ENCODE measurements at regions of chr17 and their contacts with region 1.

Region 1: DNA sequence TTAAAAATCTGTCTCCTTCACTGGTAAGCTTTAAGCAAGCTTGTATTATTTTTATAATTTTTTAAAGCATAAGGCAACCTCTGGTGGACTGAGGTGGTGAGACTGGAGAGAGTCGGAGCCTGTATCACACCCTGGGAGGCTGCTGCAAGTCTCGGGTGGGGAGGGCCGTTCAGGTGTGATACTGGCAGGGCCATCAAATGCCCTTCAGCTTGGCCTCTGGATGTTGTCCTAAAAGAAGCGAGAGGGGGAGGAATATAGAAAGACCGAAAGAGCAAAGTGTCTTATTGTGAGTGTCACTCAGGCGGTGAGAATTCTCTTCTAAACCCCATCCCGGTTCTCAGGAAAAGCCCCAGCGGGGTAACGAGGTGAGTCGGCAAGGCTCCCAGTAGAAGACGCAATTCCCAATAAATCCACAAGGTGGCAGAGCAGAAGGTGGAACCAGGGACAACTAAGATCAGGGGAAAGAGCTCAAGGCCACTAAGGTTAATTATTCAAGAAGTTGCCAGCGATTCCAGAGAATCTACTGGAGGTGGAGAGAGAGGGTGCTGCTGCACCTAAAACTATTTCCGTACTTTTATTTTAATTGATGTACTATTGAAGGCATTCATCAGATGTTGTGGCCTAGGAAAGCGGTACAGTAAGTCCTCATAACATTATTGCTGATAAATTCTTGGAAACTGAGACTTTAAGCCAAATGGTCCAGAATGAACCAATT is 14.1 kb downstream of the C17orf67 start:
- DNase-seq: no peak
- ATAC-seq: peak; percentile 93

Region 2: DNA sequence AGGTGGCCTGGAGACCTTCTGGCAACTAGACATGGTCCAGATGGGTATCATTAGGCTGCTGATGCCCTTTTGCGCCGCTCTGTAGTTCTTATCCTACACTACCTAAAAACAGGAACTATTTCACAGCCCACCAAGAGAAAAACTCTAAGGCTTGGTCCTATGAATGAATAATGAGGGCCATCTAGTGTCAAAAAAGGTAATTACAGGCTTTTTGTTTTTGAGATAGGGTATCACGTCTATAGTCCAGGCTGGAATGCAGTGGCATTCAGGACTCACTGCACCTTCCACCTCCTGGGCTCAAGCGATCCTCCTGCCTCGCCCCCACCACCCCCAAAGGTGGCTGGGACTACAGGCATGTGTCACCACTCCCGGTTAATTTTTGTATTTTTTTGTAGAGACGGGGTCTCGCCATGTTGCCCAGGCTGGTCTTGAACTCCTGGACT is 120.3 kb after region 1 on chr17:
- intact Hi-C with region 1: loop called (anchors 2 kb)
- DNase-seq: no peak
- ATAC-seq: peak; percentile 38

Measured in Right ventricle myocardium superior (tissue), 1 donor.